MCF 10A (cell line): ENCODE measurements at regions of chr20 and their contacts with region 1.

Region 1: GRCh38 chr20:62121776-62122631 is at the start of gene LSM14B:
- DNase-seq: peak; percentile 94
- H3K4me3 Mint-ChIP-seq: peak within 1 kb of the TSS; percentile 89
- H3K27ac Mint-ChIP-seq: peak within 1 kb of the TSS; percentile 95
- H3K4me1 Mint-ChIP-seq: peaks cover 10% of the 10 kb centered on the region
- H3K27me3 Mint-ChIP-seq: no peaks in the 10 kb centered on the region
- CTCF ChIP-seq: no peak
- total RNA-seq, gene LSM14B: 33.3 and 35.1 TPM in 2 replicates

Region 2: GRCh38 chr20:62065669-62066338 is 56.2 kb before region 1 on chr20 and contains the start of gene TAF4:
- CTCF ChIA-PET with region 1: no interaction called
- POLR2A ChIA-PET with region 1: interaction called, 110 read pairs
- intact Hi-C with region 1: loop called (anchors 1 kb)
- DNase-seq: peak; percentile 70
- H3K4me3 Mint-ChIP-seq: peak within 1 kb of the TSS; percentile 81
- H3K27ac Mint-ChIP-seq: peak within 1 kb of the TSS; percentile 75
- H3K4me1 Mint-ChIP-seq: peaks cover 20% of the 10 kb centered on the region
- H3K27me3 Mint-ChIP-seq: no peaks in the 10 kb centered on the region
- CTCF ChIP-seq: no peak
- total RNA-seq, gene TAF4: 15.9 and 16.1 TPM in 2 replicates

Region 3: DNA sequence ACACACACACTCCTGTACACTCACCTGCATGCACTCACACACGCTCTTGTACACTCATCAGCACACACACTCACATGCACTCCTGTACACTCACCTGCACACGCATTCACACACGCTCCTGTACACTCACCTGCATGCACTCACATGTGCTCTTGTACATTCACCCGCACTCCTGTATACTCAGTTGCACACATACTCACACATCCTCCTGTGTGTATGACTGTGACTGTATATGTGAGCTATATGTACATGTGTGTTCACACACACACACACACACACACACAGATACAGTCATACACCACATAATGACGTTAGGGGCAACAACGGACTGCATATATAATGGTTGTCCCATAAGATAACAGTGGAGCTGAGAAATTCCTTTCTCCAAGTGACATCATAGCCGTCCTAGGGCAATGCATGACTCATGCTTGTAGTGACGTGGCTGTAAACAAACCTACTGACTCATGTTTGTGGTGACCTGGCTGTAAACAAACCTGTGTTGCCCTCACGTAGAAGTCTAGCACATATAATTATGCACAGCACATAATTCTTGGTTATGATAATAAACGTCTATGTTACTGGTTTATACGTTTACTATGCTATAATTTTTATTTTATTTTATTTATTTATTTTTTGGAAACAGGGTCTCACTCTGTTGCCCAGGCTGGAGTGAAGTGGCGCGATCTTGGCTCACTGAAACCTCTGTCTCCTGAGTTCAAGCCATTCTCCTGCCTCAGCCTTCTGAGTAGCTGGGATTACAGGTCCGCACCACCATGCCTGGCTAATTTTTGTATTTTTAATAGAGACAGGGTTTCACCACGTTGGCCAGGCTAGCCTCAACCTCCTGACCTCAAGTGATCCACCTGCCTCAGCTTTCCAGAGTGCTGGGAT is 33.5 kb before region 1 on chr20:
- CTCF ChIA-PET with region 1: interaction called, 3 read pairs
- POLR2A ChIA-PET with region 1: interaction called, 17 read pairs
- intact Hi-C with region 1: no loop called
- DNase-seq: peak; percentile 87
- H3K4me3 Mint-ChIP-seq: no peak overlapping the region
- H3K27ac Mint-ChIP-seq: no peak overlapping the region
- H3K4me1 Mint-ChIP-seq: no peaks in the 10 kb centered on the region
- H3K27me3 Mint-ChIP-seq: peaks cover 31% of the 10 kb centered on the region
- CTCF ChIP-seq: no peak

Region 4: DNA sequence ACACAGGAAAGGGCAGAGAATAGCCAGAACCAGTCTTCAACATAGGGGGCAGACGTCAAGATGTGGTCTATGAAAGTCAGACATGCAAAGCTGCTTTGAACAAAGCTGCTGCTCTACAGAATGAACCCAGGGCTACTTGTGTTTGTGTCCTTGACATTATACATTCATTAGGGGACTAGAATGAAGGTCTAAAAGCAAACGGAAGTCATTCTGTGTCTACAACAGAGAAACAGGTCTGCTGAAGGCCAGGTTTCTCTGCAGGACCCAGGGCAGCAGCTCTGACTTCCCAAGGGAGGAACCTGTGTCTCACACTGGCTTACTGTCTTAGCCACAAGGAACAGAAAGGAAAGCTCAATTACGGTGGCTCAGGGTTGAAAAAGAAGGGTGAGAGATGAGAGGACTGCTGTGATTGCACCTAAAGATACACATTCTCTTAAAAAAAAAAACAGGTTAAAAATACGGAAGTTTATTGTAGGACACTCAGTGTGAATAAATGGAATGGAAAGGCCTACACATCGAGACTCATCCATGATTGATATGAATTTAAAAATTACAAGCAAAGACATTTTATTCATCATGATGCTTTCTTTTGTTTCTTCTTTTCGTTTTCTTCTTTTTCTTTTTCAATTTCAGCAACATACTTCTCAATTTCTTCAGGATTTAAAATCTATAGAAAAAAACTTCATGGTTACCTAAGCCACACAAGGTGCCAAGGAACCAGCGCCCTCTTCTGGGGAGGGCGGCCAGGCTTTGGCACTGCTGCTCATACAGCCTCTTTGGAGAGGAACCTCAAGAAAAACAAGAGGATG is 14.5 kb after region 1 on chr20:
- CTCF ChIA-PET with region 1: interaction called, 25 read pairs
- POLR2A ChIA-PET with region 1: interaction called, 124 read pairs
- intact Hi-C with region 1: no loop called
- DNase-seq: peak; percentile 72
- H3K4me3 Mint-ChIP-seq: no peak overlapping the region
- H3K27ac Mint-ChIP-seq: no peak overlapping the region
- H3K4me1 Mint-ChIP-seq: peaks cover 21% of the 10 kb centered on the region
- H3K27me3 Mint-ChIP-seq: no peaks in the 10 kb centered on the region
- CTCF ChIP-seq: peak; percentile 75

Region 5: DNA sequence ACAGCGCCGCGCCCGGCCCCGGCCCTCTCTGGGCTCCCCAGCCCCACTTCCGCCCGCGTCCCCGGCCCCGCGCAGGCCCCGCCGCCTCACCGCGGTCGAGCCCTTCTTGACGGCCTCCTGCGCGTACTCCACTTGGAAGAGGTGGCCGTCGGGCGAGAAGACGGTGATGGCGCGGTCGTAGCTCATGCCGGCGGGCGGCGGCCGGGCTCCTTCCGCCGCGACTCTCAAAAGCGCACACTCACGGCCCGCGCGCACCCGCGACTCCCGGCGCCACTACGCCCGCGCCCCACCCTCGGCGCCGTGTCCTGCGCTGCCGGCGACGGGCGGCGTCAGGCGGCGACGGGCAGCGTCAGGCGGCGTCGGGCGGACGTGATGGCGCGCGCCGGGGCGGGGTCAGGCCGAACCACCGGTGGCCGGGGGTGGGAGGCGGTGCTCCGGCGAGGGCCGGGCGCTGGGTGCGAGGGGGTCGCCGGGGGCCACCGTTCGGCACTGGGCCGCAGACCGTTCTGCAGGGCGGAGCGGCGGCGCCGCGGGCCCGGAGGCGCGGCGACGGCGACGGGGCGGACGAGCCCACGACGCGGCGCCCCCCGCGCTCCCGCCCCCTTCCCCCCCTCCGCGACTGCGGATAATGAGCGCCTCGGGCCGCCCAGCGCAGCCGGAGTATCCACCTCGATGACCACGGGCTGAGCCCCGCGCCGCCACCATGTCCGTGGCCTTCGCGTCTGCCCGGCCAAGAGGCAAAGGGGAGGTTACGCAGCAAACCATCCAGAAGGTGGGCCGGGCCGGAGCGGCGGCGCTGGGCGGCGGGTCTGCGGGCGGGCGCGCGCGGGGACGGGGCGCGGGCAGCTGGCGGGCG is 21.3 kb after region 1 on chr20 and contains the starts of genes PSMA7 and SS18L1:
- CTCF ChIA-PET with region 1: interaction called, 17 read pairs
- POLR2A ChIA-PET with region 1: interaction called, 124 read pairs
- intact Hi-C with region 1: no loop called
- DNase-seq: peak; percentile 84
- H3K4me3 Mint-ChIP-seq: peak within 1 kb of the TSS; percentile 84
- H3K27ac Mint-ChIP-seq: peak within 1 kb of the TSS; percentile 97
- H3K4me1 Mint-ChIP-seq: peaks cover 31% of the 10 kb centered on the region
- H3K27me3 Mint-ChIP-seq: no peaks in the 10 kb centered on the region
- CTCF ChIP-seq: no peak
- total RNA-seq, gene PSMA7: 362 and 419 TPM in 2 replicates
- total RNA-seq, gene SS18L1: 16.1 and 17.9 TPM in 2 replicates

Region 6: DNA sequence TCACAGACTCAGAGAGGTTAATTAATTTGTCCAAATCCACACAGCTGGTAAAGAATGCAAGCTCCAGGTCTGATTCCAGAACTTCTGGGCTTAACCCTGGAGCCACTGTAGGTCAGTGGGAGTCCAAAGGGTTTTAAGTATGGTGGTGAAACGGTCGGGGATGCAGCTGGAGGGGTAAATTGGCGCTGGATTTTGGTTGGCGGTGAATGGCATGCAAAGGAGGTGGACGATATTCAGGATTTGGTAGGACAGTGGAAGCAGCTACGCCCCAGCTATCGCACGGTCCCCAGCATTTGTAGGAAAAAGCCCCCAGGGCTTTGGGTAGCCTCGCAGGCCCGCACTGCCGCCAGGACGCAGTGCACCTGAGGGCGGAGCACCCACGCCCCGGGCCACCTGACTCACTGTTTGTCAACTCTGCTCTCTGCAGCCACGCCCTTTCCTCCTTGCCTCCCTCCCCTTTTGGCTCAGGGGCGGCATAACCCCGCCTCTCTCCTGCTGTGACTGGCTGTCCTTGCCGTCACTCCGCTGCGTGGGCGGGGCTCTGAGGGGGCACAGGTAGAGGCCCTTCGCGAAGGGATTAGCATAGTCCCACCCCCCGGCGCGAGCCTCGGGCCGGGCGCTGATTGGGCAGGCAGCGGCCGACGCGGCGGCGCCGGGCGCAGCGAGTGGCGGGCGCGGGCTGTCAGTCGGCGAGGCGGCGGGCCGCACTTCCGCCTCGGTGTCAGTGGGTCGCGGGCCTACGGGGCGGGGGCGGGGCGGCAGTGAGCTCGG is 116.0 kb after region 1 on chr20 and contains the start of gene OSBPL2:
- CTCF ChIA-PET with region 1: no interaction called
- POLR2A ChIA-PET with region 1: interaction called, 13 read pairs
- intact Hi-C with region 1: no loop called
- DNase-seq: peak; percentile 98
- H3K4me3 Mint-ChIP-seq: peak within 1 kb of the TSS; percentile 76
- H3K27ac Mint-ChIP-seq: peak within 1 kb of the TSS; percentile 61
- H3K4me1 Mint-ChIP-seq: peaks cover 6% of the 10 kb centered on the region
- H3K27me3 Mint-ChIP-seq: no peaks in the 10 kb centered on the region
- CTCF ChIP-seq: no peak
- total RNA-seq, gene OSBPL2: 38.8 and 51.9 TPM in 2 replicates